ENCODE measurements at regions of chr14 and their contacts with region 1.

Region 1: GRCh38 chr14:102200690-102201352 is 61.1 kb downstream of the WDR20 start:
- DNase-seq: peak; percentile 23
- H3K4me3 Mint-ChIP-seq: no peak overlapping the region
- H3K27ac Mint-ChIP-seq: peak overlapping the region; percentile 43
- H3K4me1 Mint-ChIP-seq: peaks cover 54% of the 10 kb centered on the region
- H3K27me3 Mint-ChIP-seq: no peaks in the 10 kb centered on the region

Region 2: GRCh38 chr14:102150744-102151143 is 50.1 kb before region 1 on chr14:
- CTCF ChIA-PET with region 1: no interaction called
- POLR2A ChIA-PET with region 1: no interaction called
- intact Hi-C with region 1: no loop called
- DNase-seq: no peak
- H3K4me3 Mint-ChIP-seq: no peak overlapping the region
- H3K27ac Mint-ChIP-seq: no peak overlapping the region
- H3K4me1 Mint-ChIP-seq: peaks cover 46% of the 10 kb centered on the region
- H3K27me3 Mint-ChIP-seq: no peaks in the 10 kb centered on the region

Region 3: GRCh38 chr14:102187058-102187457 is 13.8 kb before region 1 on chr14:
- CTCF ChIA-PET with region 1: interaction called, 3 read pairs
- POLR2A ChIA-PET with region 1: interaction called, 9 read pairs
- intact Hi-C with region 1: loop called (anchors 1 kb)
- DNase-seq: no peak
- H3K4me3 Mint-ChIP-seq: no peak overlapping the region
- H3K27ac Mint-ChIP-seq: peak overlapping the region; percentile 69
- H3K4me1 Mint-ChIP-seq: peaks cover 62% of the 10 kb centered on the region
- H3K27me3 Mint-ChIP-seq: no peaks in the 10 kb centered on the region

Measured in activated CD4-positive, alpha-beta memory T cell treated with anti-CD3 and anti-CD28 coated beads for 36 hours (primary cell).